Activated CD8-positive, alpha-beta T cell treated with anti-CD3 and anti-CD28 coated beads for 36 hours (primary cell): ENCODE measurements at regions of chr6 and their contacts with region 1.

Region 1: DNA sequence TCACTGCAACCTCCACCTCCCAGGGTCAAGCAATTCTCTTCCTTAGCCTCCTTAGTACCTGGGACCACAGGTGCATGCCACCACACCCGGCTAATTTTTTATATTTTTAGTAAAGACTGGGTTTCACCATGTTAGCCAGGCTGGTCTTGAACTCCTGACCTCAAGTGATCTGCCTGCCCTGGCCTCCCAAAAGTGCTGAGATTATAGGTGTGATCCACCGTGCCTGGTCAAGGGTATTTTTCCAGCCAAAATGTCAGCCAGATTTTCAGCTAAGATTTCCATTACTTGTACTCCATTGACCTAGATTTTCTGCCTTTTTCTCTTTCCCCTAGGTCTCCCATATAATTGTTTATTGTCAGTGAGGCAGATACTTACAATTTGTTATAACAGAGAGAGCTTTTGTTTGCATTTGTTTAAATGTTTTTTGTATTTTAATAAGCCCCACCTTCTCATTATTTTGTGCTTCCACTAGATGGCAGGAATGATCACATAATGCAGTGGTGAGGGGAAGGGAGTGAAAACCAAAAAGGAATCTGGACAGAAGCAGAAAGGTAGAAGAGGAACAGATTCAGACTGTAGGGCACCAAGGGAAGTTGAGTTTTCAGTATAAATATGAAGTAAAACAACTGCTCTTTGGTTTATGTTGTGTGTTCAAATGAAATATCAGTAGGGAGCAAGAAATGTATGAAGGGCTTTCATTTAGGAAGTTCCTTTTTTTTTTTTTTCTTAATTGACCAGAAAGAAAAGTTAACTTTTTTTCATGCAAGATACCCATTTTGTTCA is 29.7 kb downstream of the RPF2 start:
- DNase-seq: no peak
- ATAC-seq: peak; percentile 62
- H3K4me3 Mint-ChIP-seq: no peak overlapping the region
- H3K27ac Mint-ChIP-seq: peak overlapping the region; percentile 31
- H3K4me1 Mint-ChIP-seq: peaks cover 4% of the 10 kb centered on the region
- H3K27me3 Mint-ChIP-seq: no peaks in the 10 kb centered on the region
- CTCF ChIP-seq: peak; percentile 73

Region 2: GRCh38 chr6:110981202-110981600 is 30.4 kb before region 1 on chr6:
- CTCF ChIA-PET with region 1: interaction called, 12 read pairs
- POLR2A ChIA-PET with region 1: no interaction called
- intact Hi-C with region 1: no loop called
- DNase-seq: no peak
- ATAC-seq: no peak
- H3K4me3 Mint-ChIP-seq: peak overlapping the region; percentile 97
- H3K27ac Mint-ChIP-seq: peak overlapping the region; percentile 97
- H3K4me1 Mint-ChIP-seq: peaks cover 40% of the 10 kb centered on the region
- H3K27me3 Mint-ChIP-seq: no peaks in the 10 kb centered on the region
- CTCF ChIP-seq: no peak

Region 3: GRCh38 chr6:110990840-110991576 is 20.5 kb before region 1 on chr6:
- CTCF ChIA-PET with region 1: interaction called, 14 read pairs
- POLR2A ChIA-PET with region 1: interaction called, 3 read pairs
- intact Hi-C with region 1: no loop called
- DNase-seq: no peak
- ATAC-seq: no peak
- H3K4me3 Mint-ChIP-seq: no peak overlapping the region
- H3K27ac Mint-ChIP-seq: no peak overlapping the region
- H3K4me1 Mint-ChIP-seq: peaks cover 19% of the 10 kb centered on the region
- H3K27me3 Mint-ChIP-seq: no peaks in the 10 kb centered on the region
- CTCF ChIP-seq: no peak

Region 4: DNA sequence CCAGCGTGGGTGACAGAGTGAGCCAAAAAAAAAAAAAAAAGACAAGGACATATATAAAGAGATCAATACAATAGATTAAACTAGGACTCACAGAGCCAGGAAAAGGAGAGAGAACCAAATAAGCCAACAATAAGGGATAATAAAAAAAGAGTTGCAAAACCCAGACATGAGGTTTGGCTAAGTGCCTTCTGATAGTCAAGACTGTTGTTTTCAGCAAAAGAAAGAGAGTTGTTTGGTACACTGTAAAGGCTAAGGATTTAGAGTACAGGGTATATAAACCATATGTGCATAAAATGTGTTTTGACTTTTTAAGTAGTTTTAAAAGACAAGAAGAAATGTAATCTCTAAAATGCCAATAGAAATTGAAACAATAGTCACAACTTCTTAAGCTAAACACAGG is 13.1 kb after region 1 on chr6:
- CTCF ChIA-PET with region 1: interaction called, 16 read pairs
- POLR2A ChIA-PET with region 1: no interaction called
- intact Hi-C with region 1: no loop called
- DNase-seq: no peak
- ATAC-seq: no peak
- H3K4me3 Mint-ChIP-seq: no peak overlapping the region
- H3K27ac Mint-ChIP-seq: no peak overlapping the region
- H3K4me1 Mint-ChIP-seq: no peaks in the 10 kb centered on the region
- H3K27me3 Mint-ChIP-seq: no peaks in the 10 kb centered on the region
- CTCF ChIP-seq: no peak

Region 5: DNA sequence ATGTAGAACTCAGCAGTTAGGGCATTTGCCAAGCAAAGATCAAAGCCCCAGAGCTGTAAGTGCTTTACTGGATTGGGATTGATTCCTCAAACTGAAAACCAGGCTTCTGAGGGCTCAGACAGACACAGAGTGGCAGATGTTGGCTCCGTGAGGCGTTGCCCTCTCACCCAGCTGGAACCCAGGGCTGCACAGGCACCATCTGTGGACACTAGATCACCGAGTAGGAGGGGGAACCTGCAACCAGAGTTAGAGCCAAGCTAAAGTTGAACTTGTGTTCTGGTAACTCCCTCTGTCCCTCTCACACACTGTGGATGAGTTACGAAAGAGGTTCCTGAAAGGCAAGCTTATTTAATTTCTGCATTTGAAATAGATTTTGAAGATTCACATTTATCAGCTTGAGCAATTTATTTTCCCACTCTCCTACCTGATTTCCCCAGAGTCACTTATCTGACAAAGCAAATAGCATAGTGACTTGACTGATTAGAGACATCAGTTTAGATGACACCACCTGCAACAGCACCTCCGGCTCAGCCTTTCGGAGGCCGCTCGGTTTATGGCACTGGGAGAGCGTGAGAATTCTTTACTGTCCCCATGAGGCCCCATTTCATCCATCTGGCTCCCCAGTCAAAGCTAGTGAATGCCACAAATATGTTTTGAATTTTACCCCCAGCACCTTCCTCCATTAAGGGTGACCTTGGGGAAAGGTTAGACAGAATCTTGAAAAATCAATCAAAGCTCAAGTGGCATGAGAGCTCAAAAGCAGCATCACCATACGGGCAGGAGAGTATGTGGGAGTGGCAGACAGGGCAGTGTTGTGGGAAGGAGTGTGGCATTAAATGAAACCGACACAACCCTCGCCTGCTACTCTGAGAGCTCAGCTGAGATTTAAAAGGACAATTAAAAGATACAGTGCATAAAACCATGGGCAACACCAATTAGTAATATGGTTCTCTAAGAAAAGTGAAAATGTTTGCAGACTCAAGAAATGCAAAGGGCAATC is 18.8 kb after region 1 on chr6:
- CTCF ChIA-PET with region 1: interaction called, 16 read pairs
- POLR2A ChIA-PET with region 1: no interaction called
- intact Hi-C with region 1: no loop called
- DNase-seq: no peak
- ATAC-seq: peak; percentile 20
- H3K4me3 Mint-ChIP-seq: no peak overlapping the region
- H3K27ac Mint-ChIP-seq: no peak overlapping the region
- H3K4me1 Mint-ChIP-seq: peaks cover 4% of the 10 kb centered on the region
- H3K27me3 Mint-ChIP-seq: no peaks in the 10 kb centered on the region
- CTCF ChIP-seq: no peak

Region 6: GRCh38 chr6:111210194-111210728 is 198.7 kb after region 1 on chr6:
- CTCF ChIA-PET with region 1: interaction called, 31 read pairs
- POLR2A ChIA-PET with region 1: no interaction called
- intact Hi-C with region 1: no loop called
- DNase-seq: peak; percentile 12
- ATAC-seq: peak; percentile 94
- H3K4me3 Mint-ChIP-seq: no peak overlapping the region
- H3K27ac Mint-ChIP-seq: no peak overlapping the region
- H3K4me1 Mint-ChIP-seq: no peaks in the 10 kb centered on the region
- H3K27me3 Mint-ChIP-seq: no peaks in the 10 kb centered on the region
- CTCF ChIP-seq: peak; percentile 81

Region 7: DNA sequence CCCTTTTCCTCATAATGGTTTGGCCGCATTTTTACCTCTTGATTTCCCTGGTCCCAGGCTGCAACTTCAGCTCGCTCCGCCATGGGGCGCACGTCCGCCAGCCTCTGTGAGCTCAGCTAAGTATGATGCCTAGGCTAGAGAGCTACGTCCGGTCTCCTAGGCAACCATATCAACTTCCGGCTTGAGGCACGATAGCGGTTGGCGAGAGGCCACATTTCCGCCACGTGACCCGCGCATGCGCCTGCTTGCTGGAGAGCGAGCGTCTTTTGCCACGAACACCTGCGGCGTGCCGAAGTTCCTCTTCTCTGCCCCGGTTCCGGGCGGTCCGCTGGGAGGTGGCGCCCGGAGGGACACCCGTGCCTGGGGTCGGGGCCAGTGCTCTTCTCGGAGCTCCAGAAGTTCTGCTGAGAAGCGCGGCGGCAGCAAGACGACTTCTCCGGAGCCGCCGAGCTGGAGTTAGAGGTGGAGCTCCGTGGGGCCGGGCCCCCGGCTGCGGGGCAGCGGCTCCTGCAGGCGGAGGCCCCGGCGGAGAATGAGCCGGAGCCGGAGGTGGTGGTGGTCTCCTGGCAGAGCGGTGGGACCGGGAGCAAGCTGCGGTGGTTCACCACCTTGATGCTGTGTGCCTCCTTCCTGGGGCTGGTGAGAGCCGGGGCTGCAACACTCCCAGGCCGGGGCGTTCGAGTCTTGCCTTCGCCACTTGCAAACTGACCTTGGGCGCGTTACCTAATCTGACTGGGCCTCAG is 247.7 kb after region 1 on chr6:
- CTCF ChIA-PET with region 1: interaction called, 10 read pairs
- POLR2A ChIA-PET with region 1: no interaction called
- intact Hi-C with region 1: no loop called
- DNase-seq: peak; percentile 99
- ATAC-seq: peak; percentile 97
- H3K4me3 Mint-ChIP-seq: peak overlapping the region; percentile 81
- H3K27ac Mint-ChIP-seq: peak overlapping the region; percentile 78
- H3K4me1 Mint-ChIP-seq: peaks cover 32% of the 10 kb centered on the region
- H3K27me3 Mint-ChIP-seq: no peaks in the 10 kb centered on the region
- CTCF ChIP-seq: peak; percentile 90